Lower lobe of right lung (tissue), 2 donors: ENCODE measurements at regions of chr6 and their contacts with region 1.

Region 1: DNA sequence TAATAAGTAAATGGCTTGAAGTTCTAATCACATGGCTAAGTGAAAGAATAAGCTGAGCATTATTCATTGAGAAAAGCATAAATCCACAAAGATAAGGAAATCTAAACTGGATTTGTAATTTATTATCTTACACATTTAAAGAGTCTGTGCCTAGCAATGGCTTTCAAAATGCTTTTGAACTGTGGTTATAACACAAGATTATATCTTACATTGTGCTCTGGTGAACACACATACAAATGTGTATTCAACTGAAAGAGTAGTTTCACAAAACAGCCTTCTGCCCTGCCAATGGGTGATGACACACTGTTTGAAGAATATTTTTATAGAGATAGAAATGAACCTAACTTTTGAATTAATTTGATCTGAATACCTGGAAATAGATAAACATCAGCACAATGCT is 83.3 kb downstream of the AFDN start:
- DNase-seq: no peak
- ATAC-seq: no peak
- H3K4me3 ChIP-seq: no peak overlapping the region
- H3K27ac ChIP-seq: no peak overlapping the region
- H3K4me1 ChIP-seq: no peaks in the 10 kb centered on the region
- H3K27me3 ChIP-seq: no peaks in the 10 kb centered on the region
- CTCF ChIP-seq: no peak

Region 2: GRCh38 chr6:168132531-168133167 is 222.6 kb after region 1 on chr6:
- intact Hi-C with region 1: loop called (anchors 5 kb)
- DNase-seq: no peak
- ATAC-seq: peak; percentile 54 to 61
- H3K4me3 ChIP-seq: peak overlapping the region; percentile 43
- H3K27ac ChIP-seq: no peak overlapping the region
- H3K4me1 ChIP-seq: peaks cover 4% of the 10 kb centered on the region
- H3K27me3 ChIP-seq: peaks cover 11% of the 10 kb centered on the region
- CTCF ChIP-seq: peak; percentile 60